ENCODE measurements at regions of chr20 and their contacts with region 1.

Region 1: DNA sequence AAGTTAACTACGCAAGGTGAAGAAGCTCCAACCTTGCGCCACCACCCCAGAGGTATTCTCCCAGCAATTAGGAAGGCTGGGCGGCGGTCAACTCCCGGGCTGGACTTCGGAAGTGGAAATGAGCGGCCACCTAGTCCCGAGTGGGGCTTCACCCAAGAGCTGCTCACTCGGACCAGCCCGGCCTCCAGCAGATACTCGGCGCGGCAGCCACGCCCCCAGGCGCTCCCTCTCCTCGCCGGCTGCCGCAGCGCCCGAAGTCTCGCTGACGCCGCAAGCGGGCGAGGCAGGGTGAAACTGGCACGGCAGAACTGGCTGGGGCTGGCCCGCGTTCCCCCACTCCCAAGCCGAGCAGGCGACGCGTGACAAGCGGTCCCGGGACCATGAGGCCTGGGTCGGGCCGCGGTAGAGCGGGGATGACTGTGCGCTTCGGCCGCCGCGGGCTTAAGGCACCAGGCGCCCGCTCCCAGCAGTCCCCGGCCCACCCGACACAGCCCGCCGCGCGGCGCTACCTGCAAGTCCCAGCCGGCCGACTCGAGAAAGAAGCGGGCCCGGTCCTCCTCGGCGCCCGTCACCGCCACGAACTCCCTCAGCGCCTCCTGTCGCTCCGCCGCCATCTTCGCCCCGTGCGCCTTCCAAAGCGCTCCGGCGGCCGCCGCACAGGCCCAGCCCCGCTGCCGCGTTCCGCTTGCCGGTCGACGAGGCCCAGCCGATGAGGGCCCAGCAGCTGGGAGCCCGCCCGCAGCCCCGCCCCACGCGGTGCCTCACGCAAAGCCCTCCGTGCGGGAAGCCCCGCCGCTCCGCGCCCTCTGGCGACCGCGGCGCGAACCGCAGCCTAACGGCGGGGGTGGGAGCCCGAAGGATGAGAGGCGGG is at the start of gene NSFL1C:
- DNase-seq: peak; percentile 96 to 99 (median 97)
- ATAC-seq: peak; percentile 97
- H3K4me3 ChIP-seq: peak within 1 kb of the TSS; percentile 67 to 76
- H3K4me3 Mint-ChIP-seq: peak within 1 kb of the TSS; percentile 87
- H3K27ac ChIP-seq: peak within 1 kb of the TSS; percentile 67 to 73
- H3K27ac Mint-ChIP-seq: peak within 1 kb of the TSS; percentile 87
- H3K4me1 ChIP-seq: peaks cover 31% of the 10 kb centered on the region
- H3K4me1 Mint-ChIP-seq: peaks cover 52% of the 10 kb centered on the region
- H3K27me3 ChIP-seq: no peaks in the 10 kb centered on the region
- H3K27me3 Mint-ChIP-seq: peaks cover 2% of the 10 kb centered on the region
- CTCF ChIP-seq: peak; percentile 100
- total RNA-seq, gene NSFL1C: 66.0 to 70.5 TPM

Region 2: DNA sequence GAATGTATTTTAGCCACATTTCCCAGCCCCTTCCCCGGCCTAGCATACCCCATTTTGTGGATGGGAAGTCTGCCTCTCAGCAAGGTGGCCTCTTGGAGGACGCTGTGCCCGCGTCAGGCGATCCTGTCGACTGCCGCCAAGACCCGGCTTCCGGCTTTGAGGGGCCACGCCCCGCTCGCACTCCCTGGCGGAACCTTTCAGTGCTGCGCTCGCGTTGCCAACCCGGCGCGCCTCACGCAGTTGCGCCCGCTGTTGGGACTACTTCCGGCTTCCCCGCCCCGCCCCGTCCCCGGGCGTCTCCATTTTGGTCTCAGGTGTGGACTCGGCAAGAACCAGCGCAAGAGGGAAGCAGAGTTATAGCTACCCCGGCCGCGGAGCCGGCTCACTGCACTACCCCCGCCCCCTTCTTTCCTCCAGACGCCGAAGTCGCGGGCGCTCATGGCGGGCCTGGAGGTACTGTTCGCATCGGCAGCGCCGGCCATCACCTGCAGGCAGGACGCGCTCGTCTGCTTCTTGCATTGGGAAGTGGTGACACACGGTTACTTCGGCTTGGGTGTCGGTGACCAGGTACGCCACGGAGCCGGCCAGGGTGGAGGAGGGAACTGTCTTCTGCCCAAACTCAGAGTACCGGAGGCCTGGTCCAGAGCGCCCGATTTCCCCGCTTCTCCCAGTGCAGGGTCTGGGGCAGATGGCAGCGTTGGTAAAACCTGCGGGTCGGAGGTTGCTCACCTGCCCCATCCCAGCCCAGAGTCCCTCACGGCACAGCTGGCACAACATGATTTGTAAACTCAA is 347.9 kb before region 1 on chr20 and contains the start of gene PSMF1:
- CTCF ChIA-PET with region 1: no interaction called
- POLR2A ChIA-PET with region 1: no interaction called
- intact Hi-C with region 1: loop called in 1 of 2 experiments (anchors 1 kb)
- DNase-seq: peak; percentile 91 to 98 (median 96)
- ATAC-seq: peak; percentile 89
- H3K4me3 ChIP-seq: peak within 1 kb of the TSS; percentile 84 to 98
- H3K4me3 Mint-ChIP-seq: peak within 1 kb of the TSS; percentile 92
- H3K27ac ChIP-seq: peak within 1 kb of the TSS; percentile 71 to 87
- H3K27ac Mint-ChIP-seq: peak within 1 kb of the TSS; percentile 93
- H3K4me1 ChIP-seq: peaks cover 49% of the 10 kb centered on the region
- H3K4me1 Mint-ChIP-seq: peaks cover 61% of the 10 kb centered on the region
- H3K27me3 ChIP-seq: no peaks in the 10 kb centered on the region
- H3K27me3 Mint-ChIP-seq: no peaks in the 10 kb centered on the region
- CTCF ChIP-seq: no peak
- total RNA-seq, gene PSMF1: 86.4 to 87.8 TPM

Region 3: GRCh38 chr20:1325173-1326030 is 141.0 kb before region 1 on chr20:
- CTCF ChIA-PET with region 1: interaction called, 3 read pairs
- POLR2A ChIA-PET with region 1: interaction called, 6 read pairs
- intact Hi-C with region 1: loop called (anchors 1 kb)
- DNase-seq: peak; percentile 98 to 100 (median 99)
- ATAC-seq: peak; percentile 86
- H3K4me3 ChIP-seq: peak overlapping the region; percentile 81 to 97
- H3K4me3 Mint-ChIP-seq: no peak overlapping the region
- H3K27ac ChIP-seq: peak overlapping the region; percentile 94 to 99
- H3K27ac Mint-ChIP-seq: no peak overlapping the region
- H3K4me1 ChIP-seq: peaks cover 38% of the 10 kb centered on the region
- H3K4me1 Mint-ChIP-seq: peaks cover 20% of the 10 kb centered on the region
- H3K27me3 ChIP-seq: no peaks in the 10 kb centered on the region
- H3K27me3 Mint-ChIP-seq: no peaks in the 10 kb centered on the region
- CTCF ChIP-seq: no peak

Region 4: DNA sequence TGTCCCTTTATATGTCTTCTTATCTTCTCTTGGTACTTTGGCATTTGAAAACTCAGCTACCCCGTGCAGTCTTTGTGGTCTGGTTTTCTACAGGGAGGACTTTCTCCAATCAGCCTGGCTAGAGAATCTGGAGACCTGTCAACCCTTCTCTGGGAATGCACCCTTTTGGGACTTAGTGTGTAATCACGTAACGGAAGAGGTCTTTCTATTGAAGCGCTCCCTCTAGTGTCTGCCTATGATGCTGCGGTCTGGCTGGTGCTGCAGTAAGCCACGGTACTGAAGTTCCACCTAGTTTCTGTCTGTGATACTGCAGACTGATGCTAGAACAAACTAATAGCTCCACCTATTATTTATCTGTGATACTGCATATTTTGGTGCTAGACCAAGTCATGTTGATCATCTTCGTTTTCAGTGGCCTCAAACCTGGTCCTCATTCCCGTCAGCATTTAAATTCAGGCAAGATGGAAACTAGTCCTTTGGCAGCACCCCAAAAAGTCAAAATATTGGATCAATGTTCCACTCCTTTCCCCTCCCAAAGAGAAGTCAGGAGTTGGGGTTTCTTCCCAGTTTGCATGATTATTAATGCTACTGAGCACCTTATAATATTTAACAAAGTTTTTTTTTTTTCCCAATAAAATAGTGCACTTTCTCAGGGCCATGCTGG is 37.2 kb after region 1 on chr20:
- CTCF ChIA-PET with region 1: interaction called, 20 read pairs
- POLR2A ChIA-PET with region 1: no interaction called
- intact Hi-C with region 1: loop called (anchors 1 kb)
- DNase-seq: peak; percentile 54 to 91 (median 73)
- ATAC-seq: peak; percentile 100
- H3K4me3 ChIP-seq: no peak overlapping the region
- H3K4me3 Mint-ChIP-seq: no peak overlapping the region
- H3K27ac ChIP-seq: no peak overlapping the region
- H3K27ac Mint-ChIP-seq: no peak overlapping the region
- H3K4me1 ChIP-seq: peaks cover 3% of the 10 kb centered on the region
- H3K4me1 Mint-ChIP-seq: peaks cover 5% of the 10 kb centered on the region
- H3K27me3 ChIP-seq: no peaks in the 10 kb centered on the region
- H3K27me3 Mint-ChIP-seq: peaks cover 30% of the 10 kb centered on the region
- CTCF ChIP-seq: peak; percentile 99

Region 5: GRCh38 chr20:2101865-2102584 is 635.6 kb after region 1 on chr20:
- CTCF ChIA-PET with region 1: no interaction called
- POLR2A ChIA-PET with region 1: no interaction called
- intact Hi-C with region 1: loop called (anchors 2 to 10 kb)
- DNase-seq: peak; percentile 79 to 95 (median 91)
- ATAC-seq: peak; percentile 75
- H3K4me3 ChIP-seq: peak overlapping the region; percentile 79 to 100
- H3K4me3 Mint-ChIP-seq: peak overlapping the region; percentile 95
- H3K27ac ChIP-seq: peak overlapping the region; percentile 98 to 100
- H3K27ac Mint-ChIP-seq: peak overlapping the region; percentile 100
- H3K4me1 ChIP-seq: peaks cover 48% of the 10 kb centered on the region
- H3K4me1 Mint-ChIP-seq: peaks cover 41% of the 10 kb centered on the region
- H3K27me3 ChIP-seq: no peaks in the 10 kb centered on the region
- H3K27me3 Mint-ChIP-seq: no peaks in the 10 kb centered on the region
- CTCF ChIP-seq: no peak

Region 6: DNA sequence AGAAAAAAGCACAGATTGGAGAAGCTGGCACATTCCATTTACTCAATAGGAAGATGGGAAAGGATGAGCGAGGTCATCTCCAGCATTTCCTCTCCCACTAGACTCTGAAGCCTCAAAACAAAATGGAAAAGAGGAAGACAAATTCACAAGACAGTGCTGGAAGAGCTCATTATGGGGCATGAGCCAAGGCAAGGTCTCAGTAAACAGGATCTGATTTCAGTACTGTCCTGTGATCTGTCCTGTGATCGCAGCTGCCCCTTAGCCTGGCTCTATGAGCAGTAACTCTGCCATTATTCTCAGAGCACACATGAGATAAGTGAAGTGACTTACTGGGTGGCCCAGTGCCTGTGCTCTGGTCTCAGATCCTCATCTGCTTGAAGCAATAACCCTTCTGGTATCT is 1840.6 kb after region 1 on chr20:
- CTCF ChIA-PET with region 1: no interaction called
- POLR2A ChIA-PET with region 1: no interaction called
- intact Hi-C with region 1: no loop called
- DNase-seq: no peak
- ATAC-seq: no peak
- H3K4me3 ChIP-seq: no peak overlapping the region
- H3K4me3 Mint-ChIP-seq: no peak overlapping the region
- H3K27ac ChIP-seq: no peak overlapping the region
- H3K27ac Mint-ChIP-seq: no peak overlapping the region
- H3K4me1 ChIP-seq: no peaks in the 10 kb centered on the region
- H3K4me1 Mint-ChIP-seq: peaks cover 2% of the 10 kb centered on the region
- H3K27me3 ChIP-seq: no peaks in the 10 kb centered on the region
- H3K27me3 Mint-ChIP-seq: no peaks in the 10 kb centered on the region
- CTCF ChIP-seq: no peak